ENCODE measurements at regions of chr4 and their contacts with region 1.

Region 1: GRCh38 chr4:103046416-103047290 is 27.1 kb upstream of the SLC9B1 start:
- DNase-seq: peak; percentile 47
- ATAC-seq: peak; percentile 95
- H3K4me3 Mint-ChIP-seq: no peak overlapping the region
- H3K27ac Mint-ChIP-seq: no peak overlapping the region
- H3K4me1 Mint-ChIP-seq: peaks cover 2% of the 10 kb centered on the region
- H3K27me3 Mint-ChIP-seq: no peaks in the 10 kb centered on the region

Region 2: DNA sequence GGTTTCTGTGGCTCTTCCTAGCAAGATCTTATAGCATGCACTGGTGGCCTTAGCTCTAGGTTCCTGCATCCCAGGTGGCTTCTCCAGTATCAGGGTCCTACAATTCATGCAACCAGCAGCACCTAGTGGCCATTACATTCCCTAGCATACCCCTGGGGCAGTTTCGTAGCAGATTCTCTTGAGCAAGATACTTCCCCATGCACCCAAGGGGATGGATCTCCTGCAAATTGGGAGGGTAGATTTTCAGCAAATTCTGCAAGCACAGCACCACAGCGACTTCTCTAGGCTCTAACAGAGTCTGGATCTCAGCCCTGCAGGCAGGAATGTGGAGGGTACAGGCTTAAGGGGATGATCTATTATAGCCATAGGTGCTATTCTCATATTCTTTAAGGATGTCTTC is 14.1 kb before region 1 on chr4:
- CTCF ChIA-PET with region 1: interaction called, 13 read pairs
- POLR2A ChIA-PET with region 1: interaction called, 3 read pairs
- DNase-seq: peak; percentile 43
- ATAC-seq: peak; percentile 85
- H3K4me3 Mint-ChIP-seq: no peak overlapping the region
- H3K27ac Mint-ChIP-seq: peak overlapping the region; percentile 18
- H3K4me1 Mint-ChIP-seq: peaks cover 18% of the 10 kb centered on the region
- H3K27me3 Mint-ChIP-seq: no peaks in the 10 kb centered on the region

Region 3: DNA sequence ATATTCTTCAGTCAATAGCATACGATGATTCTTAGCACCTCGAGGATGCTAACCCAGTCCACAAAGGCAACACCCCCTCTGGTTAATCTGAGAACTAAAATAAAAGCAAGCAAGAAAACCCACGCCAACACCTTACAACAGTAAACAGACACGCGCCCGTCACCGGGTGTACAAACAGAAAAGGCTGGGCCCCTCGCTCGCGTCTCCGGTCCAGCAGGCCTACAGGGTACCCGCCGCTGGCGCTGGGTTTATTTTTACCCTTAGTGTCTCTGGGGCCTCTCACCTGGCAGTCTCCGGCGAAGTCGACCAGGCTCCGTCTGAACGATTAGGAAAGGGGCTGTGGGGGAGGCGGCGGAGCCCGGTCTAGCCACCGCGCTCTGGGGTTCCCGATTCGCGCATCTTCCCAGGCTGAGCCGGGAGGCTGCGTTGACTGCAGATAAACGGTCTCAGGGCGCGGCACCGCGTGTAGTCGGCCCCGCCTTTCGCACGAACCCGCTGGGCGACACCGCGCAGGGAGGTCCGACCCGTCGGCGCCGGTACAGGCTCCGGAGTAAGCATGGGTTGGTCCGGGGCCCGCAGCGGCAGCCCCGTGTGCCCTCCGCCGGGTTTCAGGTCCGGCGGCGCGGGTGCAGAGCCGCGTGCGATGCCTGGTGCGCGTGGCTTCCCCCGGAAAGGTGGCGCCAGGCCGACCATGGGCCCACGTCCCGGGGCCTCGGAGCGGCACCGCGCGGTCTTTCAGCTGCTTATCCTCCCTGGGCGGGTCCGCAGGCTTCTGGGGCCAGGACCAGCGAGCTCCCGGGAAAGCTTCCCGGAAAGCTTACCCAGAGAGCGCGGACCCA is 29.5 kb after region 1 on chr4:
- CTCF ChIA-PET with region 1: interaction called, 27 read pairs
- POLR2A ChIA-PET with region 1: interaction called, 5 read pairs
- DNase-seq: peak; percentile 74
- ATAC-seq: peak; percentile 79
- H3K4me3 Mint-ChIP-seq: peak overlapping the region; percentile 98
- H3K27ac Mint-ChIP-seq: peak overlapping the region; percentile 99
- H3K4me1 Mint-ChIP-seq: peaks cover 48% of the 10 kb centered on the region
- H3K27me3 Mint-ChIP-seq: no peaks in the 10 kb centered on the region